Transverse colon (tissue), 4 donors: ENCODE measurements at regions of chr5 and their contacts with region 1.

Region 1: GRCh38 chr5:152271420-152271819 is 133.7 kb downstream of the NMUR2 start:
- DNase-seq: no peak
- H3K4me3 ChIP-seq: no peak overlapping the region
- H3K27ac ChIP-seq: no peak overlapping the region
- H3K4me1 ChIP-seq: no peaks in the 10 kb centered on the region
- H3K27me3 ChIP-seq: no peaks in the 10 kb centered on the region
- CTCF ChIP-seq: no peak
- EP300 ChIP-seq: no peak
- POLR2A ChIP-seq: no peak

Region 2: GRCh38 chr5:152288499-152288898 is 17.1 kb after region 1 on chr5:
- in situ Hi-C with region 1: no loop called
- intact Hi-C with region 1: loop called (anchors 1 kb)
- DNase-seq: no peak
- H3K4me3 ChIP-seq: no peak overlapping the region
- H3K27ac ChIP-seq: no peak overlapping the region
- H3K4me1 ChIP-seq: no peaks in the 10 kb centered on the region
- H3K27me3 ChIP-seq: no peaks in the 10 kb centered on the region
- CTCF ChIP-seq: no peak
- EP300 ChIP-seq: no peak
- POLR2A ChIP-seq: no peak